Activated CD8-positive, alpha-beta T cell treated with anti-CD3 and anti-CD28 coated beads for 36 hours (primary cell): ENCODE measurements at regions of chr17 and their contacts with region 1.

Region 1: DNA sequence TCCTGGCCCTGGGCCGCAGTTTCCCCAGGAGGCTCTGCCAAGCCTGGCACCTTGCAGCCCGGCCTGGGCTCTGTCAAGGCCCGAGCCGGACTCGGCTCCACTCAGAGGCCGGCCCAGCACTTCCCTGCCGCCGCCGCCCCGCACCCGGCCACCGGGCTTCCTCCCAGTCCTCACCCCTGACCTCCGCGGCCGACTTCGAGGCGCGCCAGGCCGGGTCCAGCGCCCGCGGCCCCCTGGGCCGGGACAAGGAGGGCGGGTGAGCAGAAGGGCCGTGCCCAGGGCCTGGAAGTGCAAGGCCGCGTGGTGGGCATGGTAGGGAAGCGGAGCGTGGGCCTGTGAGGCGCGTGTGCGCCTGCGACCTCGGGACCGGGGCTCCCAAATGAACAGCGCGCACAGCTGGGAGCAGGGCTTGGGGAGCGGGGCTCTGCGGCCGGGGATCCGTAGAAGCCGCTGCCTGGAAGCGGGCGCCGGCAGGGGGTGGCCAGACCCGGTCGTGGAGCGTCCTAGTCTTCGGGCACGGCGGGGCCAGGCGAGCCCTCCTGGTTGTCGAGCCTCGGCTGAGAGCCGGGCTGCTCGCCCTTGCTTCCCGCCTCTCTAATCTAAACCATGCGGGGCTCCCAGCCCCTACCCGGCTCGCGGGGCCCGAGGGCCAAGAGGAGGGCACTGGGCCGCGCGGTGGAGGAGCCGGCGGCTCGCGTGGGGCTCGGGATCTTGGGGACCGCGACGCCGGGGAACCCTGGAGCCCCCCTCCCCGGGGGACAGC is 503 bp upstream of the TBX4 start:
- DNase-seq: no peak
- ATAC-seq: peak; percentile 28
- H3K4me3 Mint-ChIP-seq: no peak overlapping the region
- H3K27ac Mint-ChIP-seq: no peak overlapping the region
- H3K4me1 Mint-ChIP-seq: peaks cover 12% of the 10 kb centered on the region
- H3K27me3 Mint-ChIP-seq: peaks cover 52% of the 10 kb centered on the region
- CTCF ChIP-seq: no peak

Region 2: GRCh38 chr17:61399131-61400057 is 52.3 kb before region 1 on chr17 and contains the start of gene TBX2:
- CTCF ChIA-PET with region 1: interaction called, 5 read pairs
- POLR2A ChIA-PET with region 1: no interaction called
- intact Hi-C with region 1: loop called (anchors 5 kb)
- DNase-seq: no peak
- ATAC-seq: no peak
- H3K4me3 Mint-ChIP-seq: peak within 1 kb of the TSS; percentile 32
- H3K27ac Mint-ChIP-seq: no peak within 1 kb of the TSS
- H3K4me1 Mint-ChIP-seq: peaks cover 31% of the 10 kb centered on the region
- H3K27me3 Mint-ChIP-seq: peaks cover 65% of the 10 kb centered on the region
- CTCF ChIP-seq: no peak
- total RNA-seq, gene TBX2: not detected